Posterior cingulate gyrus (tissue), 11 donors: ENCODE measurements at regions of chr5 and their contacts with region 1.

Region 1: DNA sequence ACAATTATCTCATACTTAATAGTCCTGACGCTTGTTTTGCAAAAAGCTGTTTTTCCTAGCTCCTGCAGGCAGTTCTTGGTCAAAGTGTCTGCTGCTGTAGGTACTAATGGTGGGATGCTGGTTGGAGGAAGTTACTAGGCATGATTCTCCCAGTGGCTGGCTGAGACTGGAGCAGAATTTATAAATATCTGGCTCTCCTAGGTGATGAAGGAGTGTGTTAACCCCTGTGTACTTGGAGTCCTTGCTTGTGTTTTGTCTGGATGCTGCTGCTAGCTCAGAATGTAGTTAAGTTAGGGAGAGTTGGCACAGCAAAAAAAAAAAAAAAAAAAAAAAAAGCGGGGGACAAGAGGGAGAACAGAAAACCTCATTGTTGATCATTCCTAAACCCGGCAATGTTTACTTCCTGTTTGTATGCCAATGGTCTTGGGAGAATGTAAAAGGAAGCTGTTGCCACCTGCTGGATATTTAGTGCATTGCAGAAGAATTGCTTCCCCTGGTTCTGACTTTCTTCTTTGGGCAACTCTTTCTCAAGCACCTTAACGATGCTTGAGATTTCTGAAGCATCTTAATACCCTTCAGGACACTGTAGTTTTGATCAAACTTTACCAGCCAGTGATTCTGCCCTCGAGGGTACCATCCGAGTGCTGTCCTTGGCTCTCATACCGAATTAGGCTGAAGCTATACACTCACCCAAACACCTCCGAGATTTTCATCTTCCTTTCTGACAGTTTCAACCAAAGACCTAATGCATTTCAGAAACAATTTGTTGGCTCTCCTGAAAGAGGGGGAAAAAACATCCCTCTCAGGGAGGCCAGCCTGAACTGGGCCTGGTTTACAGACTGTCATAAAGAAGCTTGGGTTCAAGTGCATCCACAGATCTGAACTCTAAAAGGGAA is 71.7 kb upstream of the WWC1 start:
- DNase-seq: peak in 4 of 10 donors; percentile 22 to 53 (median 38)

Region 2: DNA sequence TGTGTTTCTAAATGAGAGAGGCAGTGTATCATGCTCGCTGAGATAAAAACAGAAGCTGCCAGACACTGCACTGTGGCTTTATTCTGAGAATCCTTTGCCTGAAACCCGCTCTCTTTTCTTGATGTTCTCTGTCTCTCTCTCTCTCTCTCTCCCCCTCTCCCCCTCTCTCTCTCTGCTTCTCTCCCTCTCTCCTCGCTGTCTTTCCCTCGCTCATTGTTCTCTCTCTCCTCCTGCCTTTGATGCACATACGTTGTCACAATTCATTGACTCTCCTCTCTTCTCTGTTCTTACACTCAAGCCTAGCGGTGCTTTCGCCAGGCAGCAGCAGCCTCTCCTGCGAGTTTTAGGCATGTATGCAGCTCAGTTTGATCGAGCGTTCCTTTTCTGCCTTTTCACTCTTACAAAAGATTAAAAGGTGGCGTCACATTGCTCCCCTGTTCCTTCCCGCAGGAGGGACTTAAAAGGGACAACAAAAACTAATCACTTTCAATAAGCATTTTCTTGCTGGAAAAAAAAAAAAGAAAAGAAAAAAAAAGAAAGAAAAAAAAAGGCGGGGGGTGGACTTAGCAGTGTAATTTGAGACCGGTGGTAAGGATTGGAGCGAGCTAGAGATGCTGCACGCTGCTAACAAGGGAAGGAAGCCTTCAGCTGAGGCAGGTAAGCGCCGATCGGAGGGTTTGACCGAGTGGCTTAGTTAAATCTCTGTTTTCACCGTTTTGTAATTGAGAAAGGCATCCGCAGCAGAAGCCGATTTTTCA is 646.2 kb before region 1 on chr5:
- intact Hi-C with region 1: loop called (anchors 10 kb)
- DNase-seq: peak in 5 of 10 donors; percentile 40 to 86 (median 74)

Region 3: DNA sequence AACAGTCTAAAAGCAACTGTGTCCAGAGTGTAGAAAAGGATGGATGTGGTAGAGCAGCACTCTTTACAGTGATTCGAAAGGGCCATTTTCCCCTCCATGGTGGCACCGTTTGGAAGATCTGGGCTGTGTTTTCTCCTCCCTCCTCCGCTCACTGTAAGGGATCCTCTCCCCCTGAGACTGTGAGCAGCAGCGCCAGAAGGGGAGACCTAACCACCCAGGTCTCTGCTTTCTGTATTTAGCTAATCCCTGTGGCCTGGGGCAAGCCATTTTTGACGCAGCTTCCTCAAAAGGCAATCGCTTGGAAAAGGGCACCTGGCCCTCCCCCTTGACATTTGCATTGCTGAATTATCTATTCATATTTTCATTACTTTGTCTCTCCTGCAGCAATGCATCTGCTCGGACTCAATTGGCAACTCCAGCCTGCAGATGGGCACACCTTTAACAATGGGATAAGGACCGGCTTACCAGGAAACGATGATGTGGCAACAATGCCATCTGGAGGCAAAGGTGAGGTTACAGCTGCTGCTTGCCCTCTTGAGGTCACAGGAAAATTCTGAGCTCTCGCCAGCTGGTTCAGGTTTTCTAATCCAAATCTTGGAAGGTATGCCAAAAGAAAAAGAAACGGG is 172.6 kb before region 1 on chr5:
- intact Hi-C with region 1: no loop called
- DNase-seq: peak in 6 of 10 donors; percentile 19 to 81 (median 28)

Region 4: GRCh38 chr5:168114444-168115017 is 105.2 kb before region 1 on chr5:
- intact Hi-C with region 1: loop called (anchors 10 kb)
- DNase-seq: peak in 4 of 10 donors; percentile 19 to 83 (median 26)

Region 5: DNA sequence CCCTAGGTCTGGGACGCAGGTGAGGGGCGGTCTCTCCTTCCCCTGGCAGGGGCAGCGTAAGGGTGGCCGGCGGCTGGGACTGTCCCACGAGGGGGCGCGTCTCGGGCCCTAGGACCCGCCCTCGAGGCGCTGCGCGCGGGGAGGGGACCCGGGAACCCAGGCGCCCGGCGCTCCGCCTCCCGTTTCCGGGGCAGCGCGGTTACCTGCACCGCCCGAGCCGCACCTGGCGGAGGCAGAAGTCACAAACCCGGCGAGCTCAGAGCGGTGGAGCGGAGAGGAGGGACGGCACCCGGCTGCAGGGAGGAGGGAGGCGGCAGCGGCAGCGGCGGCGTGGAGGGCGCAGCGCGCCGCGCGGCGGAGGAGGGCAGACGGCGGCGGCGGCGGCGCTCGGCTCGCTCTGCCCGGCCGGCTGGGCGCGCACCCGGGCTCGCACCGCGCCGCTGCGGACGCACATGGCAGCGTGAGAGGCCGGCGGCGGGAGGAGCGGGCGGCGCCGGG is 71.8 kb after region 1 on chr5 and contains the start of gene WWC1:
- intact Hi-C with region 1: no loop called
- DNase-seq: peak in 9 of 10 donors; percentile 44 to 93 (median 61)